ENCODE measurements at regions of chr6 and their contacts with region 1.

Region 1: DNA sequence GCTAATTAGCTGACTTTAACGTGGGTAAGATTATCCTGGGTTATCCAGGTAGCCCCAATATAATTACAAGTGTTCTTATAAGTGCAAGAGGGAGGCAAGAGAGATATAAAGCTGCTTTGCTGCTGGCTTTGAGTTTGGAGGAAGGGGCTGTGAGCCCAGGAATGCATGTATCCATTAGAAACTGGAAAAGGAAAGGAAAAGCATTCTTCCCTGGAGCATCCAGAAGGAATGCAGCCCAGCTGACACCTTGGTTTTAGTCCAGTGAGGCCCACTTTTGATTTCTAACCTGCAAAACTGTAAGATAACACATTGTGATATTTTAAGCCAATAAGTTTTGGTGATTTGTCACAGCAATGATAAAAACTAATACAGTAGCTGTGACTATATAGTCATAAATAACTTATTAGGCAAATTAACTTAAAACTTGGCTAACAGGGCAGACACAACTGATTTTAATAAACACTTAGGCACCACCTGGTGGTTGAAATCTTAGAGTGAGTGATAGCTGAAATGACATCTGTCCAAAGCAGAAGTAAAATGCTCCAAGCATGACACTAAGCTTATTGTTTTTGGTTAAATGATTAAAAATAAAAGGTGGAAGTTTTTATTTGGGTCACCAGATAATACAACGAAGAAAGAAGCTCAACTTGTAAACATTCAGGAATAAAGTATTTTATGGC is 35.6 kb downstream of the ADGRF4 start:
- DNase-seq: no peak
- ATAC-seq: no peak
- H3K4me3 Mint-ChIP-seq: no peak overlapping the region
- H3K27ac Mint-ChIP-seq: no peak overlapping the region
- H3K4me1 Mint-ChIP-seq: peaks cover 4% of the 10 kb centered on the region
- H3K27me3 Mint-ChIP-seq: peaks cover 5% of the 10 kb centered on the region
- CTCF ChIP-seq: peak; percentile 41

Region 2: DNA sequence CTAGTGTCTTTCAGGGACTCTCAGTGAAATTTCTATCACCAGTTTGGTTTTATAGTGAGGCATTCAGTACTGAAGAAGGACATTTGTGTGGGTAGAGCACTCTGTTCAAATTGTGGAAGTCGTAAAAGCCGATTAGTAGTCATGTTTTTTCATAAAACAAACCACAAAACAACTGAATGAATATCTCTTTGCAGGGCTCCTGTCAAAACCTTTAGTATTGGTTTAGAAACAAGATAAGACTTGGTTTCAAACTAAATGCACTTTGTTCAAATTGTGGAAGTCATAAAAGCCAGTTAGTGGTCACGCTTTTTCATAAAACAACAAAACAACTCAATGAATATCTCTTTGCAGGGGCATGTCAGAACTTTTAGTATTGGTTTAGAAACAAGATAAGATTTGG is 11.8 kb before region 1 on chr6:
- CTCF ChIA-PET with region 1: interaction called, 13 read pairs
- POLR2A ChIA-PET with region 1: no interaction called
- intact Hi-C with region 1: no loop called
- DNase-seq: no peak
- ATAC-seq: no peak
- H3K4me3 Mint-ChIP-seq: no peak overlapping the region
- H3K27ac Mint-ChIP-seq: no peak overlapping the region
- H3K4me1 Mint-ChIP-seq: peaks cover 5% of the 10 kb centered on the region
- H3K27me3 Mint-ChIP-seq: no peaks in the 10 kb centered on the region
- CTCF ChIP-seq: no peak

Region 3: GRCh38 chr6:47780510-47781356 is 46.7 kb after region 1 on chr6:
- CTCF ChIA-PET with region 1: interaction called, 15 read pairs
- POLR2A ChIA-PET with region 1: no interaction called
- intact Hi-C with region 1: no loop called
- DNase-seq: peak; percentile 56
- ATAC-seq: peak; percentile 97
- H3K4me3 Mint-ChIP-seq: no peak overlapping the region
- H3K27ac Mint-ChIP-seq: no peak overlapping the region
- H3K4me1 Mint-ChIP-seq: peaks cover 5% of the 10 kb centered on the region
- H3K27me3 Mint-ChIP-seq: peaks cover 11% of the 10 kb centered on the region
- CTCF ChIP-seq: peak; percentile 56

Region 4: GRCh38 chr6:48378884-48379407 is 644.9 kb after region 1 on chr6:
- CTCF ChIA-PET with region 1: no interaction called
- POLR2A ChIA-PET with region 1: no interaction called
- intact Hi-C with region 1: no loop called
- DNase-seq: no peak
- ATAC-seq: no peak
- H3K4me3 Mint-ChIP-seq: no peak overlapping the region
- H3K27ac Mint-ChIP-seq: no peak overlapping the region
- H3K4me1 Mint-ChIP-seq: no peaks in the 10 kb centered on the region
- H3K27me3 Mint-ChIP-seq: no peaks in the 10 kb centered on the region
- CTCF ChIP-seq: no peak